BJ (cell line): ENCODE measurements at regions of chr1 and their contacts with region 1.

Region 1: GRCh38 chr1:51192213-51192843 is 43.7 kb upstream of the RNF11 start:
- DNase-seq: peak; percentile 20
- H3K4me3 ChIP-seq: no peak overlapping the region
- H3K27me3 ChIP-seq: no peaks in the 10 kb centered on the region
- CTCF ChIP-seq: peak; percentile 90

Region 2: DNA sequence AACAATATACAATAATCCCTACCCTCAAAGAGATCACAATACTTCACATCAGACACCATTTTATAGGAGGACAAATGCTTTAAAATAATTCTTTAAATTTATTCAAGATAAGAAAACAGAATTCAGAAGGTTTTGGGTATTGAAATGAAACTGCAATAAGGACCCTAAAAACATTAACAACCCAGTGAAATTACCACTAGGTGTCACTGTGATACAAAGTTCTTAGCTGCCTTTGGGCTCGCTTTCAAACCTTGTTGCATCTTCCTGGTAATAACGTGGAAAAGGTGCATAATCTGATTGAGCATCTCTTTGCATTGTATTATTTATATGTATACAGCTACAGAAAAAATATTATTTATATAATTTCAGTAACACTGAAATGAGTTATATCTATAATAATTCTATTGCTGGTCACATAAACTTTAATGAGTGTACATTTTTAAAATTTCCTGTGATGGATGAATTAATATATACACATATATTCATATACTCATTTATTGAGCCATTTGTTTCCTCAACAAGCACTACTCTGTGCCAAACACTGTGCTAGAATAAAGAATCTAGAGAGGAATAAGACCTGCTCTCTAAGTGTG is 417.5 kb before region 1 on chr1:
- CTCF ChIA-PET with region 1: interaction called, 70 read pairs
- POLR2A ChIA-PET with region 1: no interaction called
- DNase-seq: no peak
- H3K4me3 ChIP-seq: no peak overlapping the region
- H3K27me3 ChIP-seq: no peaks in the 10 kb centered on the region
- CTCF ChIP-seq: peak; percentile 71

Region 3: DNA sequence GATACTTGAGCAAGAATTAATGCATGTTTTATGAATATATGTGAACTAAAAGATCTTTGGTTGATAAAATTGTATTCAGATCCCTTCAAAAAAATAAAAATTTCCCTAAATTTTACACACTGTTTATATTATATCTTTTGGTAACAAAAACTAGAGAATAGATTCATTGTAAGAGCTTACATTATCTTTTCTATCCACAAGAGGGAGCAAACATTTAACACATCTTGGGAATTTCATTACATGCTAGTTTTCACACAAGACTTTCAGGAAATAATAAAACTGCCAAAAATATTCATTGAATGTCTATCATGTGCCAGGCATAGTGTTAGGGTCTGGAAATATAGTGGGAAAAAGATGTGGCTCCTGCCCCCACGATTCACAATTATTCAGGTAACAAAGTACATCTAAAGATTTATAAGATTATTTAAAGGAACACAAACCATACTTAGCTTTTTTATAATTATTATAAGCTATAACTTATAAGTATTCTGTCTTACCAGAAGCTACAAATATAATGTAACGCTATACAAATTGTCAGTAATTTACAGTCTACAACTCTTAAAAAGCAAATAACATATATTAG is 262.9 kb before region 1 on chr1:
- CTCF ChIA-PET with region 1: interaction called, 11 read pairs
- POLR2A ChIA-PET with region 1: no interaction called
- DNase-seq: no peak
- H3K4me3 ChIP-seq: no peak overlapping the region
- H3K27me3 ChIP-seq: no peaks in the 10 kb centered on the region
- CTCF ChIP-seq: peak; percentile 45

Region 4: GRCh38 chr1:51019811-51020210 is 172.5 kb before region 1 on chr1:
- CTCF ChIA-PET with region 1: no interaction called
- POLR2A ChIA-PET with region 1: no interaction called
- DNase-seq: peak; percentile 58
- H3K4me3 ChIP-seq: no peak overlapping the region
- H3K27me3 ChIP-seq: no peaks in the 10 kb centered on the region
- CTCF ChIP-seq: no peak

Region 5: GRCh38 chr1:51175278-51175677 is 17.1 kb before region 1 on chr1:
- CTCF ChIA-PET with region 1: interaction called, 23 read pairs
- POLR2A ChIA-PET with region 1: no interaction called
- DNase-seq: no peak
- H3K4me3 ChIP-seq: no peak overlapping the region
- H3K27me3 ChIP-seq: peaks cover 5% of the 10 kb centered on the region; the same call in 1 of the 2 replicates
- CTCF ChIP-seq: no peak

Region 6: GRCh38 chr1:51210055-51210454 is 17.7 kb after region 1 on chr1:
- CTCF ChIA-PET with region 1: interaction called, 10 read pairs
- POLR2A ChIA-PET with region 1: no interaction called
- DNase-seq: no peak
- H3K4me3 ChIP-seq: no peak overlapping the region
- H3K27me3 ChIP-seq: no peaks in the 10 kb centered on the region
- CTCF ChIP-seq: no peak

Region 7: GRCh38 chr1:51305371-51305900 is 113.1 kb after region 1 on chr1:
- CTCF ChIA-PET with region 1: no interaction called
- POLR2A ChIA-PET with region 1: no interaction called
- DNase-seq: no peak
- H3K4me3 ChIP-seq: no peak overlapping the region
- H3K27me3 ChIP-seq: no peaks in the 10 kb centered on the region; the same call in 1 of the 2 replicates
- CTCF ChIP-seq: no peak